Astrocyte of the cerebellum (primary cell): ENCODE measurements at regions of chr2 and their contacts with region 1.

Region 1: GRCh38 chr2:102063941-102064678 is 72.3 kb downstream of the IL1R2 start:
- DNase-seq: peak; percentile 95
- H3K4me3 ChIP-seq: peak overlapping the region; percentile 1
- CTCF ChIP-seq: no peak

Region 2: DNA sequence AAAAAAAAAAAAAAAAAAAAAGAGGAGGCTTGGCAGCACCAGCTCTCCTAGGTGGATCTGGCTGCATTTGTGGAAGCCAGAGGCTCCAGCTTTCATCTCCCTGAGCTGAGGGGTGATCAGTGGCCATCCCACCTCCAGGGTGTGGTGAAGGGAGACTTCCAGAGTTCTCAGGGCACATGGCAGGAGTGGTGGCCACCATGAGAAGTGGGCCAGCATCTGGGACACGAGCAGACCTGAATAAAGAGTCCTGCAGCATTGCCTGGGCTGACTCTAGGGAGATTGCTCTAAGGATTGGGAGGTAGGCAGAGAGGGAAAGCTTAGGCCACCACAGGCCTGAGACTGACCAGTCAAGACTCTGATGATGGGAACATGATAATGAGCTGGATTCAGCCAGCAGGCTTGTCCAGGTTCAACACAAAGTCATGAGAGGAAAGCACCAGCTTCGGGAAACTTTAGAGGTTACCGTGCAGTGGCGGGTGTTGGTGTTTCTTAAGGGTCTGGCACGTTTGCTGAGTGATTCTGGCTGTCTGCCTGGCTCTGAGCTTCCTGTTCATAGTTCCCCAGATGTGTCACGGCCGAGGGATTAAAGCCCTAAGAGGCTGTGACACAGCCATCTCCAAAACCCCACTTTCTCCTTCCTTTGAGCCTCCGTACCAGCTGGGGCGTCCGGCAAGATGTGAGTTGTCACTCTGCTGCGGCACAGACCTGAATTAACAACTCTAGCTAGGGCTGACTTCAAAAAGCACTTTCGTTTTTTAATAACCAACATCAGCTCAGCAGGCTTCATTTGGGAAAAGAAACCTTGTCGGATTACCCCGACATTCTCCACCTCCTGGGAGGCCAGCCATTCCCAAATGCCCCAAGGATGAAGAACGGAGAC is 40.1 kb after region 1 on chr2:
- in situ Hi-C with region 1: loop called (anchors 5 kb)
- DNase-seq: peak; percentile 84
- H3K4me3 ChIP-seq: peak overlapping the region; percentile 49
- CTCF ChIP-seq: no peak

Region 3: GRCh38 chr2:102155642-102156491 is 91.8 kb after region 1 on chr2:
- in situ Hi-C with region 1: no loop called
- DNase-seq: no peak
- H3K4me3 ChIP-seq: no peak overlapping the region
- CTCF ChIP-seq: no peak

Region 4: GRCh38 chr2:103496850-103497249 is 1432.7 kb after region 1 on chr2:
- in situ Hi-C with region 1: no loop called
- DNase-seq: no peak
- H3K4me3 ChIP-seq: no peak overlapping the region
- CTCF ChIP-seq: no peak